MCF 10A (cell line): ENCODE measurements at regions of chr13 and their contacts with region 1.

Region 1: GRCh38 chr13:37074703-37075102 is 15.2 kb upstream of the SUPT20H start:
- DNase-seq: peak; percentile 49
- H3K4me3 Mint-ChIP-seq: no peak overlapping the region
- H3K27ac Mint-ChIP-seq: no peak overlapping the region
- H3K4me1 Mint-ChIP-seq: no peaks in the 10 kb centered on the region
- H3K27me3 Mint-ChIP-seq: no peaks in the 10 kb centered on the region
- CTCF ChIP-seq: peak; percentile 43

Region 2: DNA sequence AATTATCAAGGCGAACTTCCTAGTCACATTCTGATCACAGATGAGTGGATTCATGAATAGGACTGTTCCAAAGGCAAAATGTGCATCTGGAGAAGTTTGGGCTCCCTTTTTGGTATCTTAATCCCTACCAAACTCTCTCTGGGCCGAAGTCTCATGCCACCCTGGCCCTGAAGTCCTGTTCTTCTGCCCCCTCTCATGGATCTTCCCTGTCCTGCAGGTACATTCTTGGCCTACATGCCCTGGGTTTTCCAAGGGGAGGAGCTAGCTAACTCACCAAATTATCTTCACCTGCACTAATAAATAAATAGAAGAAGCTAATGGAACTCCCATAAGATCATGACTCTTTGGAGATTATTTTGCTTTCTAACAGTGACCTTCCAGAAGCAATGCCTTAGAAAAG is 350.6 kb before region 1 on chr13:
- CTCF ChIA-PET with region 1: no interaction called
- POLR2A ChIA-PET with region 1: no interaction called
- intact Hi-C with region 1: no loop called
- DNase-seq: no peak
- H3K4me3 Mint-ChIP-seq: no peak overlapping the region
- H3K27ac Mint-ChIP-seq: no peak overlapping the region
- H3K4me1 Mint-ChIP-seq: peaks cover 4% of the 10 kb centered on the region
- H3K27me3 Mint-ChIP-seq: peaks cover 31% of the 10 kb centered on the region
- CTCF ChIP-seq: no peak

Region 3: DNA sequence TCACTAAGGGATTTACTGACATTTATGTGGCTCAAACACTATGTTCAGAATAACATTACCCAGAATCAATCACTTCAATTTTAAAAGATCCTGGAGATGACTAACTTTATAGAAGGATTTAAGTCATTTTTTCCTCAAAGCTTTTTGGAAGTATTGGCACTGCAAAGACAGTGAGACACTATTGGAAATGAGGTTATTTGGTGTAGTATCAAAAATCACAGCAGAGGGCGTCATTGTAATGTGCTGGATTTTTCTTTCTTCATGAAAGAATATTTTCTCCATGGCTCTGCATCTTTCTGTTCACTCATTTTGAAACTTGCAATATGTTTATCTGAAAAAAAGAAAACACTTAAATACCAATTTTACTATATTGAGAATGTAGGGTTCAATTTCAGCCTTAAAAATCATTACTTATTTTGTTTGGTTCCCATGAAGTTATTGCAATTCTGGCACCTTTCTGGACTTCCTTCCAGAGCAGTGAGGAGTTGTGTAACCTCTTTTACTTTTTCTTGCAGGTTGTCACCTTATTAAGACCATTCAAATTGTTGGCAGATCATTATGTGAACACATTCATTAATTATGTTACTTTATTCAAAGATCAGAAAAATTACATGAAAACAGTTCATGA is 34.5 kb after region 1 on chr13:
- CTCF ChIA-PET with region 1: no interaction called
- POLR2A ChIA-PET with region 1: interaction called, 3 read pairs
- intact Hi-C with region 1: loop called (anchors 2 kb)
- DNase-seq: peak; percentile 55
- H3K4me3 Mint-ChIP-seq: no peak overlapping the region
- H3K27ac Mint-ChIP-seq: no peak overlapping the region
- H3K4me1 Mint-ChIP-seq: peaks cover 19% of the 10 kb centered on the region
- H3K27me3 Mint-ChIP-seq: no peaks in the 10 kb centered on the region
- CTCF ChIP-seq: peak; percentile 74

Region 4: DNA sequence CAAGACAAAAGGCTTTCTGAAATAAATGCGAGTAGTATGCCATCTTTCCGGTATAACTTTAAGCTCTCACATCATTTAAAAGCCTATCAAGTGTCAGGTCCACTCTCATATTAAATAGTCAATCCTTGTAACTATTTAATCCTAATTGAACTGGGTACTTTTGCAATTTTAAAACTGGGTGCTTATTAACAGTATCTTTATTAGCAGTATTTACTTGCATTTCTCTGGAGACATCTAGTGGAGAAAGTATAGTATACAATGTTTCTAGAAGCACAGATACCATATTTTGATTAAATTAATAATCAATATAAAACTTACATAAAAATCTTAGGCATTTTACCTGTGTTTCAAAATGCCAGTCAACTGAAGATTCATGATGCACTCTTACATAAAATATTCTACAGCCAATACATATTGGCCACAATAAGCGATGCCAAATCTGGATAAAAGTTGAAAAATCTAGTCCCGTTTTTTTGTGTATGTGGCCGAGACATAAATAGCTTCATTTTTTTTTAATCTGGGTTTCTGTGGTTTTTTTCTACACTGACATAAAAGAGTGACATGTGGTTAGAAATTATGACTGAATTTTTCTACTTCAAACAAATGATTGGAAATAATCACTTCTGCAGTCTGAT is 528.2 kb after region 1 on chr13:
- CTCF ChIA-PET with region 1: interaction called, 26 read pairs
- POLR2A ChIA-PET with region 1: interaction called, 4 read pairs
- intact Hi-C with region 1: loop called (anchors 1 kb)
- DNase-seq: peak; percentile 42
- H3K4me3 Mint-ChIP-seq: no peak overlapping the region
- H3K27ac Mint-ChIP-seq: no peak overlapping the region
- H3K4me1 Mint-ChIP-seq: no peaks in the 10 kb centered on the region
- H3K27me3 Mint-ChIP-seq: no peaks in the 10 kb centered on the region
- CTCF ChIP-seq: peak; percentile 61

Region 5: GRCh38 chr13:37608750-37609339 is 534.1 kb after region 1 on chr13:
- CTCF ChIA-PET with region 1: interaction called, 26 read pairs
- POLR2A ChIA-PET with region 1: interaction called, 4 read pairs
- intact Hi-C with region 1: loop called (anchors 1 kb)
- DNase-seq: peak; percentile 11
- H3K4me3 Mint-ChIP-seq: no peak overlapping the region
- H3K27ac Mint-ChIP-seq: no peak overlapping the region
- H3K4me1 Mint-ChIP-seq: no peaks in the 10 kb centered on the region
- H3K27me3 Mint-ChIP-seq: no peaks in the 10 kb centered on the region
- CTCF ChIP-seq: peak; percentile 46

Region 6: GRCh38 chr13:38582133-38582532 is 1507.4 kb after region 1 on chr13:
- CTCF ChIA-PET with region 1: interaction called, 5 read pairs
- POLR2A ChIA-PET with region 1: interaction called, 3 read pairs
- intact Hi-C with region 1: loop called (anchors 10 kb)
- DNase-seq: peak; percentile 61
- H3K4me3 Mint-ChIP-seq: no peak overlapping the region
- H3K27ac Mint-ChIP-seq: no peak overlapping the region
- H3K4me1 Mint-ChIP-seq: no peaks in the 10 kb centered on the region
- H3K27me3 Mint-ChIP-seq: peaks cover 17% of the 10 kb centered on the region
- CTCF ChIP-seq: peak; percentile 32

Region 7: DNA sequence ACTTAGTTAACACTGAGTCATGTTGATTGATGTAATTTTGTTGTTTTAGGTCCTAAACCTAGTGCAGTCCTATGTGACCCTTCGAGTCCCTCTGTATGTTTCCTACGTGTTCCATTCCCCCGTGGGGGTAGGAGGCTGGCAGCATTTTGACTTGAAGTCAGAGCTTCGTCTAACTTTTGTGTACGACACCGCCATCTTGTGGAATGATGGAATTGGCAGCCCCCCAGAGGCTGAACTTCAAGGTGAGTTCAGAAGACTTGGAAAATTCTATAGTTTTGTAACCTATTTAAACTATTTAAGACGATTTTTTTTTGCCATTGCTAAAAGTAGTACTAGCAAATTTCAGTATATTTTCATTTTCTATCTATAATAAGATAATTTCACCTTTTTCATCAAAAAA is 1798.0 kb after region 1 on chr13:
- CTCF ChIA-PET with region 1: no interaction called
- POLR2A ChIA-PET with region 1: no interaction called
- intact Hi-C with region 1: loop called (anchors 5 kb)
- DNase-seq: peak; percentile 68
- H3K4me3 Mint-ChIP-seq: no peak overlapping the region
- H3K27ac Mint-ChIP-seq: no peak overlapping the region
- H3K4me1 Mint-ChIP-seq: no peaks in the 10 kb centered on the region
- H3K27me3 Mint-ChIP-seq: peaks cover 70% of the 10 kb centered on the region
- CTCF ChIP-seq: peak; percentile 49